Activated CD8-positive, alpha-beta T cell treated with anti-CD3 and anti-CD28 coated beads, Interleukin-2, amount 10 ng/mL, durations not matched to agents 7 days and 5 days (primary cell): ENCODE measurements at regions of chr9 and their contacts with region 1.

Region 1: GRCh38 chr9:127450830-127451724 is at the starts of genes LRSAM1 and RPL12:
- DNase-seq: peak; percentile 98
- ATAC-seq: peak; percentile 66
- H3K4me3 Mint-ChIP-seq: peak within 1 kb of the TSS; percentile 95
- H3K27ac Mint-ChIP-seq: peak within 1 kb of the TSS; percentile 97
- H3K4me1 Mint-ChIP-seq: peaks cover 54% of the 10 kb centered on the region
- H3K27me3 Mint-ChIP-seq: no peaks in the 10 kb centered on the region
- total RNA-seq, gene LRSAM1: 17.8 to 18.0 TPM
- total RNA-seq, gene RPL12: 1,248 to 1,328 TPM

Region 2: DNA sequence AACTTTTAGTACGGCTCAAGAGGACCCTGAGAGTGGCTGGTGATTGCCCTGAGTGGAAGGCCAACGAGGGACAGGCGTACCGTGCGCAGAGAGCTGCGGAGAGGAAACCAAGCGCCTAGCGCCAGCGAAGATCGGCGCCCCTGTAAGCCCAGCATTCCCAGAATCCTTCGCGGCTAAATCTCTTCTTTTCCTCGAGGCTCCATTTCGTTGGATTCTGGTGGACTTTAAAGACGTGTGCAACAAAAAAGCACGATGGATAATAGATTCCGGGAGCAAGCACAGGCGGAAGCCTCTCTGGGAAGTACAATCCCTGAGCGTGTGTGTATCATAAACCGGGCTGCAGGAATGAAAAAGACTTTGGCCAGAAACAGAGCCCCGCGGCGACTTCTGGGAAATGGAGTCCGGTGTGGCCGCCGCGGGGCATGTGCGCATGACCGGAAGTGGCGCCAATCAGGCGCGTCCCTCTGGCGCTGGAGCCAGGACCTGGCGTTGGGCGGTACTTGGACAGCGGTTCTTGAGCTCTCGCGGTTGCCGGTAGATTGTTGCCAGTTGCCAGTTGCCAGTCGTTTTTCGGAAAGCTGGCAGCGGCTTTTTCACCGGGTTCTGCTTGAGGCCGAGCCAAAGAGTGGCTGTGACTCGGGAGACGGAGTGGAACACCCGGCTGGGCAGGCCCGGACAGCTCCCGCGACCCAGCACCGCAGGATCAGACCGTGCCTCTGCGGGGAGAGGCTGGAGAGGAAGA is 27.0 kb before region 1 on chr9 and contains the start of gene ZNF79:
- CTCF ChIA-PET with region 1: interaction called, 8 read pairs
- POLR2A ChIA-PET with region 1: interaction called, 40 read pairs
- DNase-seq: peak; percentile 95
- ATAC-seq: peak; percentile 89
- H3K4me3 Mint-ChIP-seq: peak within 1 kb of the TSS; percentile 99
- H3K27ac Mint-ChIP-seq: peak within 1 kb of the TSS; percentile 96
- H3K4me1 Mint-ChIP-seq: peaks cover 46% of the 10 kb centered on the region
- H3K27me3 Mint-ChIP-seq: no peaks in the 10 kb centered on the region
- total RNA-seq, gene ZNF79: 11.3 to 12.1 TPM

Region 3: DNA sequence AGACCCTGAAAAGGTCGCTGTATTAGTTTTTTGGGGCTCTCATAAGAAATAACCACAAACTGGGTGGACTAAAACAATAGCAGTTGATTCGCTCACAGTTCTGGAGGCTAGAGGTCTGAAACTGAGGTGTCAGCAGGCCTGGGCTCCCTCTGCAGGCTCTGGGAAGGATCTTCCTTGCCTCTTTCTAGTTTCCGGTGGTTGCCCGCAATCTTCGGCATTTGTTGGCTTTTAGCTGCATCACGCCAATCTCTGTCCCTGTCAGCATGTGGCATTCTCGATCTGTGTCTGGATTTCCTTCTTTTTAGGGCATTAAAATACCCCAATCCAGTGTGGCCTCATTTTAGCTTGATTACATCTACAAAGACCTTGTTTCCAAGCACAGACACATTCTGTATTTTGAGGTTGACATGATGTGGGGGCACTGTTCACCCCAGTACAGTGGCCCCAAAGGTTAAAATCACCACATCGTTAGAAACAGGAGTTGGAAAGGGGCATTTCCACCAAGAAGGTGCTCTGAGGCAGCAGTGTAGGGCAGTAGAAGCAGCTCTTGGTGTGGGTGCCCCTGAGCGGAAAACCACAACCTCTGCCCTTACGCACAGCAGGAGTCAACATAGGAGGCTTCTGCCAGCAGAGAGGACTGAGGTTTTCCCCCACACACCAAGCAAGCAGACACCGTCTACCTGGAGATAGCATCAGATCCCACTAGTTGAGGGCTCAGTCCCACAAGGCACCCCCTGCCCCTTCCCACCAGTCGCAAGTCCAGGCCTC is 13.4 kb before region 1 on chr9:
- CTCF ChIA-PET with region 1: no interaction called
- POLR2A ChIA-PET with region 1: interaction called, 20 read pairs
- DNase-seq: no peak
- ATAC-seq: peak; percentile 45
- H3K4me3 Mint-ChIP-seq: no peak overlapping the region
- H3K27ac Mint-ChIP-seq: peak overlapping the region; percentile 37
- H3K4me1 Mint-ChIP-seq: peaks cover 14% of the 10 kb centered on the region
- H3K27me3 Mint-ChIP-seq: no peaks in the 10 kb centered on the region